ENCODE measurements at regions of chr14 and their contacts with region 1.

Region 1: DNA sequence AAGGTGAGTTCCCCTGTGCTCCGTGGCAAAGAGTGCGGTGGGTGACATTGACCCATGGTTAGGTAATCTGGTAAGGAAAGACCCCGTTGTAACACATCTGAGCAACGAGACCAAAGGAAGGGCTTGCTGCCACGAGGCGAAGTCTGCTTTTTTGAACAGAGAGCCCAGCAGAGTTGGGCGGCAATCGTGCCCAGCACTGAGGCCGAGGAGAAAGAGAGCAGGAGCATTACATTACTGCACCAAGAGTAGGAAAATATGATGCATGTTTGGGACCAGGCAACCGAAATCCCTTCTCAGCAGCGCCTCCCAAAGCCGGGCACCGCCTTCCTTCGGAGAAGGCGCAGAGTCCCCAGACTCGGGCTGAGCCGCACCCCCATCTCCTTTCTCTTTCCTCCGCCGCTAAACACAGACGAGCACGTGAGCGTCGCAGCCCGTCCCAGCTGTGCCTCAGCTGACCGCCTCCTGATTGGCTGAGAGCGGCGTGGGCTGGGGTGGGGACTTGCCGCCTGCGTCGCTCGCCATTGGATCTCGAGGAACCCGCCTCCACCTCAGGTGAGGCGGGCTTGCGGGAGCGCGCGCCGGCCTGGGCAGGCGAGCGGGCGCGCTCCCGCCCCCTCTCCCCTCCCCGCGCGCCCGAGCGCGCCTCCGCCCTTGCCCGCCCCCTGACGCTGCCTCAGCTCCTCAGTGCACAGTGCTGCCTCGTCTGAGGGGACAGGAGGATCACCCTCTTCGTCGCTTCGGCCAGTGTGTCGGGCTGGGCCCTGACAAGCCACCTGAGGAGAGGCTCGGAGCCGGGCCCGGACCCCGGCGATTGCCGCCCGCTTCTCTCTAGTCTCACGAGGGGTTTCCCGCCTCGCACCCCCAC is at the start of gene HIF1A:
- DNase-seq: peak; percentile 98
- H3K4me3 Mint-ChIP-seq: peak within 1 kb of the TSS; percentile 94
- H3K27ac Mint-ChIP-seq: peak within 1 kb of the TSS; percentile 93
- H3K4me1 Mint-ChIP-seq: peaks cover 44% of the 10 kb centered on the region
- H3K27me3 Mint-ChIP-seq: no peaks in the 10 kb centered on the region
- total RNA-seq, gene HIF1A: 398 to 417 TPM

Region 2: DNA sequence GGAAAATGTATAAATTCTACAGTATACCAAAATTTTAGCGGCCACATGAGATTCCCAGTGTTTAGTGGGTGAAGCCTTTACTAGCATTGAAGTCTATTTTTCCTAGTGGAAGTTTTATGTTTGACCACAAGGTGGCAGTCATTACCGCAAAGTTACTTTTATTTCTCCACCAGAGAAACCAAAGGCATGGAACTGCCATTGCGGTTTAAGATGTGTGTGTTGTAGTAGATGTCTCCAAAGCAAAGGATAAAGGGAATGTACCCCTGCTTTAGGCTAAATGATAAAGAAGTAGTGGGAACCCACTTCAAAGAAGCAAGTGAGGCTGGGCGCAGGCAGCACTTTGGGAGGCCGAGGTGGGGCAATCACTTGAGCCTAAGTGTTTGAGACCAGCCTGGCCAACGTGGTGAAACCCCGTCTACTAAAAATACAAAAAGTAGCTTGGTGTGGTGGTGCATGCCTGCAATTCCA is 233.2 kb before region 1 on chr14:
- CTCF ChIA-PET with region 1: interaction called, 3 read pairs
- intact Hi-C with region 1: loop called (anchors 1 kb)
- DNase-seq: peak; percentile 60
- H3K4me3 Mint-ChIP-seq: peak overlapping the region; percentile 27
- H3K27ac Mint-ChIP-seq: peak overlapping the region; percentile 93
- H3K4me1 Mint-ChIP-seq: peaks cover 71% of the 10 kb centered on the region
- H3K27me3 Mint-ChIP-seq: no peaks in the 10 kb centered on the region

Region 3: DNA sequence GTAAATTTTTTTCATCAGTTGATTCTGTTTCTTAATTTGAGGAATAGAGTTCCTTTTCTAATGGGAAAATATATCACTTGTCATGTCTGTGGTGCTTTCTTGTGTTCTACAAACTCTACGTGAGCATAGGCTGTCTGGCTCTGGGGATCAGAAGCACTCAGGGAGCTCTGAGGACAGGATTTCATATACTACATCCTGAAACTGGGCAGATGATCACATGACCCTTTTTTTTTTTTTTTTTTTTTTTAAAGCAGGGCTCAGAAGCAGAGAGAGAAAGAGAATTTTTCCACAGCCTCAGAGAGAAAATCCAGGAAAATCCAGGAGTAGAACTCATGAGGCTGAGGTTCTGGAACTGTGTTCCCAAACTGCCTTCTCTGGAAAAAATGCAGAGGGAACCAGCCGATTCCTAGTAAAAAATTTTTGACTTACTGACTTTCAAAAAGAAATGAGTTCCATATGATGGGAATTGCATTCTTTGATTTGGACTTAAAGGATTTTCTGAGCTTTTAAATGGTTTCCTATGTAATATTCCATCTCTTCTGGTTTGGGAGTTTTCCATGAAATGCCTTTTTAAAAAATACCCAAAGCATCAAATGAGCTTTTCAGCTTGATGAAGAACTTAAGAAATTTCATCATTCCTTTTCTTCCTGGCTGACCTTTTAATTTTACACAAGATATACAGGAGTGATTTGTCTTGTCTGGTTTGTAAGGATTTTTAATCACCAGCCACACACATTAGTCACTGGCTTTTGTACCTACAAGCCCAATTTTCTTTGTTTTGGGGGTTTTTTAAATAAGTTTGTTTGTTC is 182.8 kb before region 1 on chr14:
- CTCF ChIA-PET with region 1: interaction called, 3 read pairs
- intact Hi-C with region 1: loop called (anchors 1 kb)
- DNase-seq: peak; percentile 46
- H3K4me3 Mint-ChIP-seq: peak overlapping the region; percentile 56
- H3K27ac Mint-ChIP-seq: peak overlapping the region; percentile 100
- H3K4me1 Mint-ChIP-seq: peaks cover 95% of the 10 kb centered on the region
- H3K27me3 Mint-ChIP-seq: no peaks in the 10 kb centered on the region

Region 4: DNA sequence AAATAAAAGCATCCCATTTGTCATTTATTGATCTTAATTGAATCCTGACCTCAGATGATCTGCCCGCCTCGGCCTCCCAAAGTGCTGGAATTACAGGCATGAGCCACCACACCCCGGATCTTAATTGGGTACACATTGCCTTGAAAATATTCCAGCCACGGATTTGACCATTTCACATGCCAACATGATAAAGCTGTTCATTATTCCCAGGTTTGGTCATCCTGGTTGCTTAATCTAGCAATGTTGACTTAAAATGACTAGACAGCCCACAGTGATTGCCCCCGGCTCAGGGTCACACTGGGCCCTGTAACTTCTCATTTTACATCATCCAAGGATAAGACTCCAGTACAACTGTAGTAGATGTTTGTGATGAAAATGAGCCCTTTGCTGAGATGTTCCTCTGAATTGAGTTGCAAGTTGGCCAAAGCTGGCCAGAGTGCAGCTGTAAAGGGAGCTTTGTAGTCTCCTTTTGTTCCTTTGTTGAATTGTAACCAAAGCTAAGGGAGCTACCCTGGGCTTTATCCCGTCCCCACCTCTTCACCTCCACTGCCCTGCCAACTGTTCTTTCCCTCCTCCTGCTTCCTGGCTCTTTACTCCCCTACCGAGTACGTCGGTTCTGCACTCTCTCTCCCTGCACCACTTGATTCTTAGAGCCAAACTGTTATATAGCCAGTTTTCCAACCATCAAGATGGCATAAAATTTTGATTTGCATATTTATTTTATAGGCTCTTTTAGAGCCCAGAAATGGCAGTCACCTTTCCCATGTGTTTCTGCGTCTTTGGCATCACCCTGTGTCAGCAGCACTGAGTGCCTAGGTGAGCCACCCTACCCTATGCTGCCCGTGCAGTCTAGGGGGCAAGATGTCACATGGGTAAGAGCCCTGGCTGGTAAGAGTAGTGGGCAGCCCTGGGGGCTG is 141.1 kb before region 1 on chr14:
- CTCF ChIA-PET with region 1: interaction called, 7 read pairs
- intact Hi-C with region 1: loop called (anchors 1 kb)
- DNase-seq: no peak
- H3K4me3 Mint-ChIP-seq: no peak overlapping the region
- H3K27ac Mint-ChIP-seq: peak overlapping the region; percentile 97
- H3K4me1 Mint-ChIP-seq: peaks cover 66% of the 10 kb centered on the region
- H3K27me3 Mint-ChIP-seq: no peaks in the 10 kb centered on the region

Region 5: GRCh38 chr14:61620130-61620946 is 74.7 kb before region 1 on chr14:
- CTCF ChIA-PET with region 1: interaction called, 9 read pairs
- intact Hi-C with region 1: loop called (anchors 1 kb)
- DNase-seq: peak; percentile 85
- H3K4me3 Mint-ChIP-seq: no peak overlapping the region
- H3K27ac Mint-ChIP-seq: peak overlapping the region; percentile 89
- H3K4me1 Mint-ChIP-seq: peaks cover 80% of the 10 kb centered on the region
- H3K27me3 Mint-ChIP-seq: no peaks in the 10 kb centered on the region

Region 6: DNA sequence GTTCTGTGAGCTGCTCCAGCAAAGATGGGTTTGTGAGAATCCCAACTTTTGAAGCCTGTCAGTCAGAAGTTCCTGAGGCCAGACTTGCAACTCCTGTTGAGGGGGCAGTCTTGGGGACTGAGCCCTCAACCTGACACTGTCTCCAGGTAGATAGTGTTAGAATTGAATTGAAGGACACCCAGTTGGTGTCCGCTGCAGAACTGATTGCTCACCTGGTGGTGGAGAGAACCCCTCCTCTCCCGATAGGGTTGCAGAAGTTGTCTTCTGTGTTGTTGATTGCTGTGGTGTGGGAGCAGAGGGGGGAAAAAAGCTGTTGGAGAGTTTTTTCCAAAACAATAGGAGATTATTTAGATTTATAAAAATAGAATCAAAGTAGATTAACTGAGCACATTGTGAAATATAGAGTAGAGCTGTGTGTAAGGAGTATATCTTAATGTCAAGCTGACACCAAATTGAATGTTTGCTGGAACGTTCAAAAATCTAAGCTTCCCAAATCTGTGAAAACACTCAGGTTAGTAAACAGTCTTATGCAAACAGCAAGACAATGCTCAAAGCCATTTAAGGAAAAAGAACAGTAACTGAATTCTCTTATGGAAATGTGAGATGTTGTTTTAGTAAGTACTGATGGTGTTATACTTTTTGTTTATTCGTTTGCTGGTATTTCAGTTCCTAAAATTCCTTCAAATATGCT is 18.8 kb after region 1 on chr14:
- CTCF ChIA-PET with region 1: interaction called, 4 read pairs
- intact Hi-C with region 1: loop called (anchors 2 kb)
- DNase-seq: no peak
- H3K4me3 Mint-ChIP-seq: peak overlapping the region; percentile 30
- H3K27ac Mint-ChIP-seq: peak overlapping the region; percentile 16
- H3K4me1 Mint-ChIP-seq: peaks cover 92% of the 10 kb centered on the region
- H3K27me3 Mint-ChIP-seq: no peaks in the 10 kb centered on the region

Region 7: DNA sequence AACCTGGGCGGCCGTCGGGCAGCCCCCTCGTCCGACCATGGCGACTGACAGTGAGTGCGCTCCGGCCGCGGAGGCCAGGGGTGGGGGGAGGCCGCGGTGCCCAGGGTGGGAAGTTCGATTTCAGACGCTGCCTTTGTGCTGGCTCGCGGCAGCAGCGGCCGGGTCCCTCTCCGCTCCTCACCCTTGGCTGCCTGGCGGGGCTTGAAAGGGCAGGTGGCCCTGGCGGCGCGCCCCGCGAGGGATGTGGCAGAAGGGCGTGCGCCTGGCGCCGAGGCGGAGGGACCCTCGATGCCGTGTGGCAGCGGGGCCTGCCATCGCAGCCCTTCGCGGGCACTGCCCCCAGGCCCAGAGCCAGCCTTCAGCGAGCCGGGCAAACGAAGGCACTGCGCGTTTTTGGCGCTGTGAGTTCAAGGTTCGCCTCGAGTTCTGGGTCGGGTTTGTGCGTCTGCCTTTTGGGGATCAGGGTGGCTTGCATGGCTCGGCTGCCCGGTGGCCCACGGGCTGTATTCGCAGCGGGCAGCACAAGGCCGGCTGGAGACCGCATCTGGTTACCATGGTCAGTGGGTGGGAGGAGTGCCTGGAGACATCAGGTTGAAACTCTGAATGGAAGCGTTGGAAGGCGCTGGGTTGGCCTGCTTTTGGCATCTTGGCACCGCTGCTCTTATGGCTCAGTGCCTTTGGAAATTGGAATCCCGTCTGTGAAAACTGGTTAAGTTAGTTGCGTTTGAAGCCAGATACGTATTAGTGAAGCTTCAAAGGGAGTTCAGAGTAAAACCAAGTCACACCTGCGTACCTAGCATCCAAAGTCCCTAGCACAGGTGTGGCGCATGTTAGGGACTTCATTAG is 117.9 kb after region 1 on chr14:
- CTCF ChIA-PET with region 1: no interaction called
- intact Hi-C with region 1: no loop called
- DNase-seq: peak; percentile 11
- H3K4me3 Mint-ChIP-seq: peak overlapping the region; percentile 69
- H3K27ac Mint-ChIP-seq: no peak overlapping the region
- H3K4me1 Mint-ChIP-seq: peaks cover 11% of the 10 kb centered on the region
- H3K27me3 Mint-ChIP-seq: peaks cover 43% of the 10 kb centered on the region